Right ventricle myocardium inferior (tissue), 1 donor: ENCODE measurements at regions of chr1 and their contacts with region 1.

Region 1: GRCh38 chr1:13828454-13829151 is 128.6 kb downstream of the PRDM2 start:
- DNase-seq: no peak
- ATAC-seq: peak; percentile 32

Region 2: DNA sequence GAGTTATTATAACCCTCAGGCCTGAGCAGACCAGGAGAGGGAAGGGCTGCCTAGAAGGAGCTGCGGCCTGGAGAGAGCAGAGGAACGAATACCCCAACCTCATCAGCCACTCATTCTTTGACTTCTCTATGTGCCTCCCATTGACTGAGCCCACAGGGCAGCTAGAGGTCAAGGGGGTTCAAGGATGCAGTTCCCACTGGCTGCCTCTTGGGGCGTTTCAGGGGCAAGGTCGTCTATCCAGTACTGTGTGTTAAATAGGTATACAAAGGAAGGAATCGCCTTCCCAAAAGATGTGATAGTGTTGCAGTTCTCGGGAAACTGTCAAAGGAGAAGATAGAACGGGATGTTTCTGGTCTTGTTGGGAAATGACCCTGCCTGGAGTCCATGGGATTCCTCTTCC is 122.0 kb after region 1 on chr1:
- intact Hi-C with region 1: loop called (anchors 10 kb)
- DNase-seq: no peak
- ATAC-seq: no peak